Heart left ventricle (tissue), 16 donors: ENCODE measurements at regions of chr3 and their contacts with region 1.

Region 1: DNA sequence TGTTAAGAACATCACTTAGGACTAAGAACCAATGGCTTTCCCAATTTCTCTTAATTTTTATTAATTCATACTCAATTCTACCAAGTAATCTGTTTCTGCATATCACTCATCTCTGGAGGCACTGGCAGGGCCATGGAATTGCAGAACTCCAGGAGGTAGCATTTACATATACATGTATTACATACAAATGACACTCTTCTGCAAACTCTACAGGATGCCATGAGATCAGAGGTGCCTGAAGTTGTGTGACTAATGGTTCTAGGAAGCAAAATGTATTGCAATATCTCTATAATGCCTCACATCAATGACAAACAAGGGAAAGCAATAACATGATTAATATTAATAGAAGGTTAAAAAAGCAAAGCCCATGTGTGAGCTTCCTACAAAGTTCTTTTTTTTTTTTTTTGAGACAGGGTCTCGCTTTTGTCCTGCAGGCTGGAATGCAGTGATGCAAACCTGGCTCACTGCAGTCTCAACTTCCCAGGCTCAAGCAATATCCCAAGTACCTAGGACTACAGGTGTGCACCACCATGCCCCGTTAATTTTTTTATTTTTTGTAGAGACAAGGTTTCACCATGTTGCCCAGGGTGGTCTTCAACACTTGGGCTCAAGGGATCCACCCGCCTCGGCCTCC is 33.0 kb downstream of the DENND6A start:
- DNase-seq: no peak
- ATAC-seq: no peak
- H3K4me3 ChIP-seq: no peak overlapping the region
- H3K27ac ChIP-seq: peak overlapping the region in 7 of 12 donors; percentile 25 to 63 (median 46)
- H3K4me1 ChIP-seq: peaks cover 0 to 19% (median 15%) of the 10 kb centered on the region in 12 donors
- H3K27me3 ChIP-seq: no peaks in the 10 kb centered on the region
- CTCF ChIP-seq: no peak
- POLR2A ChIP-seq: no peak

Region 2: DNA sequence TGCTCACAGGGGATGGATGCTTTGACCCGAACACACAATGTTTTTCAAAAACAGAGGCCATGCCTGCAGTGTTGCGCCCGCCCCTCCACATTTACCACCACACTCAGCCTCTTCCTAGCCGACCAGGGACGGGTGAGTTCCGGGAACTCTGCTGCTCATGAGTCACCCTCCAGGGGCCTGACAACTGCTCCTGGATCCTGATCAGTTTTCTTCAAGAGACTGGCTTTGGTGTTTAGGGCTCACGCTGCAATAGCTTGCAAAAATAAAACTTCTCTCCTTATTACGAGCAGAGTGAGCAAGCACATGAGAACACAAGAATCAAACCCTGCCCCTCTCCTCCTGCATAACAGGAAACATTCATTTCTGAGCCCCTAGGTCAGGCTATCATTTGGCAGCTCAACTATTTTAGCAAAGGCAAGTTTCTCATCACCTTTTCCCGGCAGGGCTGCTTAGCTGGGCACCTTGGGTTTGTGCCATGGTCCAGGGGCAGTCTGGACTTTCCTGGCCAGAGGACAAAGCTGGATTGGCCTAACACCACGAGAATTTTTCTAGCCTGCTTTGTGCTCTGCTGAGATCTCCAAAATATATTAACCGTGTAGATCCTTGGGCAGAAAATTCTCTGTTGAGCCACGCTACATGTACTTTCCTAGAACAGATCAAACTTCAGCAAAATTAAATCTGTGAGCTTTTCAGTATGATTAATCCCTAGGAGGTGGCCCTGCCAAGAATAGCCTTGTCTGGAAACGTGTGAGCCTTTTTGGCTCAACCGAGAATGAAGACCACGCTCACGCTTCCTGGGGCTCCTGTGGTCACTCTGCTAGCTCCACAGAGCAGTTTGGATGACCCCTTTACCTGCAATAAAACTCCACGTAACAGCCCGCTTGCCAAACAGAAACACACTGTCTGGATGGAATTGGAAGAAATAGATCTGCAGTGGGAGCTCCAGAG is 652.1 kb before region 1 on chr3:
- intact Hi-C with region 1: no loop called
- DNase-seq: peak in 3 of 5 donors; percentile 56 to 75 (median 75)
- ATAC-seq: peak; percentile 59 to 90 (median 86)
- H3K4me3 ChIP-seq: peak overlapping the region in 3 of 12 donors; percentile 3 to 25 (median 22)
- H3K27ac ChIP-seq: peak overlapping the region in 11 of 12 donors; percentile 9 to 85 (median 57)
- H3K4me1 ChIP-seq: peaks cover 0 to 30% (median 17%) of the 10 kb centered on the region in 12 donors
- H3K27me3 ChIP-seq: no peaks in the 10 kb centered on the region
- CTCF ChIP-seq: no peak
- POLR2A ChIP-seq: no peak

Region 3: GRCh38 chr3:57627976-57628375 is 31.9 kb before region 1 on chr3:
- intact Hi-C with region 1: loop called in 1 of 10 experiments (anchors 5 kb)
- DNase-seq: no peak
- ATAC-seq: no peak
- H3K4me3 ChIP-seq: no peak overlapping the region
- H3K27ac ChIP-seq: no peak overlapping the region
- H3K4me1 ChIP-seq: no peaks in the 10 kb centered on the region
- H3K27me3 ChIP-seq: no peaks in the 10 kb centered on the region
- CTCF ChIP-seq: no peak
- POLR2A ChIP-seq: no peak

Region 4: DNA sequence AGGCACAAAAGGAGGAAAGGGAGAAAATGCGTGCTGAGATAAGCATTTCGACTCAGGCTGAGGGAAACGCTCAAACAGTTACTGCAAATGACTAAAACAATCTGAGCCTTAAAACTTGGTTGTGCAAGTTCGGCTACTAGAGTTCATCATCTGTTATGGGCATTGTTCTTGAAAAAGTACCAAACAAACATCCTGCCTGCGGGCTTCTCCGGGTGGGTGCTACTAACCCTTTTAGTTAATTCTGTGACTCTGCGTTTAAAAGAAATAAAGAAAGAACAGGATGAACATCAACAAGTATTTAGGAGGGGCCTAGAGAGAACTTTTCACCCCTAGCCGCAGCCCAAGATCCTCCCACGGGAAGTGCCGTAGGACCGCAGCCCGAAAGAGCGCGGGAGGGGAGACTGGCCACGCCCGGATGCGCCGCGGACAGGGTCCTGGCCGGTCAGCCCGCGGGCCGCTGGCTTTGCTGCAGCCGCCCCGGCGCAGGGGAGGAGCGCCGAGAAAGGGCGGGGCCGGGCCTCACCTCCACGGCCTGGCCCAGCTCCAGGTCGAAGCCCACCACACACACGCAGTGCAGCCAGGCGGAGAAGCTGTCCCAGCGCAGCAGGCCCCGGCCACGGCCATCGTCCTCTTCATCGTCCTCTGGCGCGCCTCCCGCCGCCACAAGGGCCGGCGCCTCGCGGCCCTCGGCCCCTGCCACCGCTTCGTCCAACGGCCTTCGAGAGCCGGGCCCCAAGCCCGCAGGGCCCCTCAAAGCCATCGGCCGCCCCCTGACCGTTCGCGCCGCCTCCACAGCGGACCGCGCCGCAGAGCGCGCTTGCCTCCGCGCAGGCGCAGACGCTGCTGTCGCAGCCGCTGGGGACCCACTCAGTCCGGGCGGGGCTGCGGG is 32.6 kb after region 1 on chr3 and contains the start of gene DENND6A:
- intact Hi-C with region 1: loop called in 1 of 10 experiments (anchors 5 kb)
- DNase-seq: peak; percentile 88 to 99 (median 91)
- ATAC-seq: peak; percentile 91 to 97 (median 96)
- H3K4me3 ChIP-seq: peak within 1 kb of the TSS; percentile 50 to 97 (median 87)
- H3K27ac ChIP-seq: peak within 1 kb of the TSS; percentile 85 to 100 (median 99)
- H3K4me1 ChIP-seq: peaks cover 0 to 53% (median 33%) of the 10 kb centered on the region in 12 donors
- H3K27me3 ChIP-seq: no peaks in the 10 kb centered on the region
- CTCF ChIP-seq: peak in 2 of 12 donors; percentile 6 to 19
- POLR2A ChIP-seq: peak; percentile 70 to 95
- total RNA-seq, gene DENND6A: 12.3 to 27.9 (median 18.6) TPM

Region 5: GRCh38 chr3:57815036-57815435 is 155.1 kb after region 1 on chr3:
- intact Hi-C with region 1: loop called in 2 of 10 experiments (anchors 10 kb)
- DNase-seq: no peak
- ATAC-seq: no peak
- H3K4me3 ChIP-seq: no peak overlapping the region
- H3K27ac ChIP-seq: no peak overlapping the region
- H3K4me1 ChIP-seq: peaks cover 0 to 28% (median 8%) of the 10 kb centered on the region in 12 donors
- H3K27me3 ChIP-seq: no peaks in the 10 kb centered on the region
- CTCF ChIP-seq: no peak
- POLR2A ChIP-seq: no peak

Region 6: DNA sequence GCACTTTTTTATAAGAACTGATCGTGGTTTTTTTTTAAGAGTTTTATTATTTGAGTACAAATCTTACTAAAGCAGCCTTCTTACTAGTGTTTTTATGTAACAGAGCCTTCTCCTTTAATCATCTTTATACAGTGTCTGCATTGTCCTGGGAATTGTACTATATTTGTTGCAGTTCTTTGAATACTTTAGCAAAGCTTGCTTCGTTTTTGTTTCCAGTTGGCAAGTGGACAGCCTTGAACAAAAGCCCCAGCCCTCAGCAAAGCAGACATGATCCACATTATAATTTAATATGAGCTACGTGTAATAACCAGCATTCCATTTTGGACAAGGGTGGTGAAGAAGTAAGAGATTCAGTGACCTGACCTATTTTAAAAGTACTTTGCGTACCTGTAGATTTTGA is 236.1 kb after region 1 on chr3:
- intact Hi-C with region 1: no loop called
- DNase-seq: no peak
- ATAC-seq: no peak
- H3K4me3 ChIP-seq: peak overlapping the region in 4 of 12 donors; percentile 6 to 18 (median 11)
- H3K27ac ChIP-seq: peak overlapping the region in 8 of 12 donors; percentile 16 to 91 (median 80)
- H3K4me1 ChIP-seq: peaks cover 0 to 27% (median 2%) of the 10 kb centered on the region in 12 donors
- H3K27me3 ChIP-seq: no peaks in the 10 kb centered on the region
- CTCF ChIP-seq: no peak
- POLR2A ChIP-seq: no peak